ENCODE measurements at regions of chr11 and their contacts with region 1.

Region 1: DNA sequence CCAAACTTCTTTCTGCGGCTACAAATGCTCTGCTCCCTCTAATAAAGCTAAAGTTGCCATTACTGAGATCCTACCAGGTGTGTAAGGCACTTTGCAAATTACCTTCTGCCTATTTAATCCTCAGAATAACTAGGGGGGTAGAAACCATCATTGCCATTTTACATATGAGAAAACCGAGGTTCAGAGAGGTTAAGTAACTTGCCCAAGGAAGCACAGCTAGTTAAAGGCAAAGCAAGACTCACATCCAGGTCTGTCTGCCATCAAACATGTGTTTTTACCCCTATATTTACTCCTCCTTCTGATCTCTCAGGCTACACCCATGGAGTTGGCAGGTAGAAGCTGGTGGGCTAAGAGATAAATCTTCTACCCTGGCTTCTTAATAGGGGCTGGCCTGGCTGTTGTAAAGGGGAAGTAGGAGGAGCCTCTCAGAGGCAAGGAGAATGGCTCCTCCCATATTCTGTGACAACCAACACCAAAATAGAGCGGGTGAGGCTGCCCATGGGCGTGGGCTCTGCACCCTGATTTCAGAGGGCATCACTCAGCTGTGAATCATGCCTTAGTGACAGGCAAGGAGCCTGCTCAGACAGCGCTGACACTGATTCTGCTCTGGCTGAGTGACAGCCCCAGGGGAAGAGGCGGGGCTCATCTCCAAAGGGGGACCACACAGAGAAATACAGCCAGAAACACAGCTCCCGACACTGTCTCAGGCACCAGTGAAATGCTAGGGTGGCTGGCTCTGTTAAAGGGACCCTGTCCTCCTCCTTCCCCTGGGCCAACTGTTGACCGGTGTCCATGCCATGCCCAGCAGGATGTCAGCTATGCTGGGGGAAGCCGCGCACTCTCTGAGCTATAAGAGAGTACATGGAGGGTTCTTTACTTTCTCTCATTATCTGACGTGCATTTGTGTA is 106.8 kb downstream of the ABTB2 start:
- DNase-seq: peak; percentile 30 to 87 (median 67)
- ATAC-seq: peak; percentile 94
- H3K4me3 ChIP-seq: peak overlapping the region; percentile 26
- H3K4me3 Mint-ChIP-seq: peak overlapping the region; percentile 14
- H3K27ac ChIP-seq: no peak overlapping the region
- H3K27ac Mint-ChIP-seq: peak overlapping the region; percentile 60
- H3K4me1 ChIP-seq: peaks cover 48% of the 10 kb centered on the region
- H3K4me1 Mint-ChIP-seq: peaks cover 63% of the 10 kb centered on the region
- H3K27me3 ChIP-seq: no peaks in the 10 kb centered on the region
- H3K27me3 Mint-ChIP-seq: no peaks in the 10 kb centered on the region
- CTCF ChIP-seq: no peak

Region 2: GRCh38 chr11:34044664-34045485 is 206.1 kb before region 1 on chr11:
- CTCF ChIA-PET with region 1: no interaction called
- POLR2A ChIA-PET with region 1: no interaction called
- intact Hi-C with region 1: no loop called
- DNase-seq: peak in 2 of 14 experiments; percentile 35 to 43
- ATAC-seq: no peak
- H3K4me3 ChIP-seq: no peak overlapping the region
- H3K4me3 Mint-ChIP-seq: no peak overlapping the region
- H3K27ac ChIP-seq: no peak overlapping the region
- H3K27ac Mint-ChIP-seq: no peak overlapping the region
- H3K4me1 ChIP-seq: no peaks in the 10 kb centered on the region
- H3K4me1 Mint-ChIP-seq: no peaks in the 10 kb centered on the region
- H3K27me3 ChIP-seq: no peaks in the 10 kb centered on the region
- H3K27me3 Mint-ChIP-seq: peaks cover 4% of the 10 kb centered on the region
- CTCF ChIP-seq: no peak

Region 3: GRCh38 chr11:34234086-34234740 is 16.8 kb before region 1 on chr11:
- CTCF ChIA-PET with region 1: interaction called, 6 read pairs
- POLR2A ChIA-PET with region 1: interaction called, 9 read pairs
- intact Hi-C with region 1: loop called in 1 of 2 experiments (anchors 1 kb)
- DNase-seq: peak; percentile 37 to 93 (median 72)
- ATAC-seq: peak; percentile 99
- H3K4me3 ChIP-seq: no peak overlapping the region
- H3K4me3 Mint-ChIP-seq: no peak overlapping the region
- H3K27ac ChIP-seq: no peak overlapping the region
- H3K27ac Mint-ChIP-seq: peak overlapping the region; percentile 42
- H3K4me1 ChIP-seq: peaks cover 21% of the 10 kb centered on the region
- H3K4me1 Mint-ChIP-seq: peaks cover 19% of the 10 kb centered on the region
- H3K27me3 ChIP-seq: no peaks in the 10 kb centered on the region
- H3K27me3 Mint-ChIP-seq: no peaks in the 10 kb centered on the region
- CTCF ChIP-seq: no peak

Measured in CD4-positive, alpha-beta T cell (primary cell).